Tibial artery (tissue), 4 donors: ENCODE measurements at regions of chr5 and their contacts with region 1.

Region 1: GRCh38 chr5:64207978-64208377 is 42.3 kb downstream of the RNF180 start:
- DNase-seq: no peak
- H3K4me3 ChIP-seq: no peak overlapping the region
- H3K27ac ChIP-seq: no peak overlapping the region
- H3K4me1 ChIP-seq: peaks cover 0 to 50% (median 9%) of the 10 kb centered on the region in 4 donors
- H3K27me3 ChIP-seq: no peaks in the 10 kb centered on the region
- CTCF ChIP-seq: peak; percentile 31 to 49

Region 2: DNA sequence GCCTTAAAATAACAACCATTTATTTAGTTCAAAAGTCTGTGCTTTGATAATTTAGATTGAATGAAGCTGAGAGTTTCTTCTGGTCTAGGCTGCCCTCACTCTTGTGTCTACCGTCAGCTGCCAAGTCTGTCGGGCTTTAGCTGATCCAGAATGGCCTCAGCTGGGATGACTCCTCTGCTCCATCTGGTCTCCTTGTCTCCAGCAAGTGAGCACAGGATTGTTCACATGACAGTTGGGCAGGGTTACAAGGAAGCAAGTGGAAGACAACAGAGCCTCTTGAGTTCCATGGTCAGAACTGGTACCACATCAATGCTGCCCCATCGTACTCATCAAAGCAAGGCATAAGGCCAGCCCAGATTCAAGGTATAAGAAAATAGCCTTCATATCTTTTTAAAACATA is 254.8 kb before region 1 on chr5:
- intact Hi-C with region 1: no loop called
- DNase-seq: no peak
- H3K4me3 ChIP-seq: no peak overlapping the region
- H3K27ac ChIP-seq: no peak overlapping the region
- H3K4me1 ChIP-seq: no peaks in the 10 kb centered on the region
- H3K27me3 ChIP-seq: no peaks in the 10 kb centered on the region
- CTCF ChIP-seq: no peak

Region 3: DNA sequence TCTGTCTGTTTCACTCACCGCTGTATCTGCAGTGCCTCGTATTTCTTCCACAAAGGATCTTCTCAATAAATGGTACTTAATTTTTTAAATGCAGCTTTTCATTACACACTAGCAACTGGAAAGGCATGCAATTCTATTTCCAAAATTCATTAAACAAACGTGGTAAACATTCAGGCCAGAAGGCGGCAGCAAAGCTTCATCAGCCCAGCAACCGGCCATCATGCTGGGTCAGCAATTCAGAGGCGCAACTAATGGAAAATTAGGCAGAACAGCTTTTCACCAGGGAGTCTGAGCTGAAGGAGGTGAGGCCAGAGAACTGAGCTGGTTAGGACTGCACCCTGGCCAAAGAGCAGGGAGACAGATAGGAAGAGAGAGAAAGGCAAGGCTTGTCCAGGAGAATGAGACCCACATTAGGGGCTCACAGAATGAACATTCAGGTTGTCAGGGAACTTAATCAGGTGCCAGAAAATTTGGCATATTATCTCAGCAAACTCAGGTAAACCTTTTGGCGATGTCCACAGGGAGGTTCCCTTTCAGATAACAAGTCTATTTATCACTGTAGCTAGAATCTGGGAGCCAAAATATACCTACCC is 60.0 kb before region 1 on chr5:
- intact Hi-C with region 1: loop called (anchors 5 kb)
- DNase-seq: peak; percentile 68 to 81
- H3K4me3 ChIP-seq: no peak overlapping the region
- H3K27ac ChIP-seq: peak overlapping the region; percentile 22 to 71
- H3K4me1 ChIP-seq: peaks cover 0 to 52% (median 16%) of the 10 kb centered on the region in 4 donors
- H3K27me3 ChIP-seq: no peaks in the 10 kb centered on the region
- CTCF ChIP-seq: peak; percentile 83 to 84

Region 4: DNA sequence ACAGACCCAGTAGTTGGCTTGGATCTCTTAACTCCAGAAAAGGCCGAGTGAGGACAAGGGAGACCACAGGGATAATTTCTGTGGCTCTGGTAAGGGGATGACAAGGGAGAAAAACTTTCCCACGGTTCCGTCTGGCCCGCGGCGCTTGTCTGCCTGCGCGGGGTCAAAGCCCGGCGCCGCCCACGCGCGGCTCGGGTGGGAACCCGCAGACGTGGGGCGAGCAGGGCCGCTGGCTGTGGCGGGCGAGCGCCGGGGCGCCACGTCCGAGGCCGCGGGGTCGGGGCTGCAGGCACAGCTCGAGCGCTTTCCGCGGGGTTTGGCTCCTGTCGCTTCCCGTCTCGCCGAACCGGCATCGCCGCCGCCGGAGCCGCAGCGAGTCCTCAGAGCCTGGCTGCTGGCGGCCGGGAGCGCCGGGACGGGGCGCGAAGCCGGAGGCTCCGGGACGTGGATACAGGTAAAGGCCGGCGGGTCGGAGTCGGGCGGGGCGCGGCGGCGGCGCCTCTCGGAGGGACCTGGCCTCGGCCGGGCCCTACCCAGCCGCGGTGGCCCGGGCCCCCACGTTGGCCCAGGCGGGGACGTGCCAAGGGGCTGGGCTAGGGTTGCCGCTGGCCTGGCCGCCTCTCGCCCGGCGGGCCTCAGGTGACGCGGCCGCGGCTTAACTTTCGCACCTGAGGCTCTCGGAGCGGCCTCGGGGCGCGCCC is 42.3 kb before region 1 on chr5 and contains the start of gene RNF180:
- intact Hi-C with region 1: no loop called
- DNase-seq: peak; percentile 30 to 80
- H3K4me3 ChIP-seq: peak within 1 kb of the TSS; percentile 67 to 82
- H3K27ac ChIP-seq: peak within 1 kb of the TSS; percentile 95 to 98
- H3K4me1 ChIP-seq: peaks cover 0 to 61% (median 16%) of the 10 kb centered on the region in 4 donors
- H3K27me3 ChIP-seq: no peaks in the 10 kb centered on the region
- CTCF ChIP-seq: no peak